Common myeloid progenitor, CD34-positive (primary cell): ENCODE measurements at regions of chr1 and their contacts with region 1.

Region 1: GRCh38 chr1:26853156-26853555 is 9.8 kb upstream of the SFN start:
- DNase-seq: peak; percentile 67 to 82 (median 76)
- H3K4me3 ChIP-seq: no peak overlapping the region
- H3K27ac ChIP-seq: no peak overlapping the region
- H3K4me1 ChIP-seq: no peaks in the 10 kb centered on the region
- H3K27me3 ChIP-seq: no peaks in the 10 kb centered on the region

Region 2: GRCh38 chr1:26833432-26834405 is 19.4 kb before region 1 on chr1:
- CTCF ChIA-PET with region 1: interaction called, 18 read pairs
- POLR2A ChIA-PET with region 1: no interaction called
- DNase-seq: peak; percentile 96 to 99 (median 97)
- H3K4me3 ChIP-seq: peak overlapping the region in 4 of 7 experiments; percentile 21 to 53 (median 36)
- H3K27ac ChIP-seq: peak overlapping the region; percentile 70 to 85
- H3K4me1 ChIP-seq: peaks cover 13 to 48% (median 33%) of the 10 kb centered on the region in 4 experiments
- H3K27me3 ChIP-seq: no peaks in the 10 kb centered on the region

Region 3: GRCh38 chr1:26864610-26865527 is 11.7 kb after region 1 on chr1:
- CTCF ChIA-PET with region 1: interaction called, 30 read pairs
- POLR2A ChIA-PET with region 1: interaction called, 3 read pairs
- DNase-seq: peak; percentile 94 to 96 (median 95)
- H3K4me3 ChIP-seq: peak overlapping the region; percentile 69 to 97 (median 86)
- H3K27ac ChIP-seq: peak overlapping the region in 1 of 2 experiments; percentile 78
- H3K4me1 ChIP-seq: peaks cover 0 to 20% (median 14%) of the 10 kb centered on the region in 4 experiments
- H3K27me3 ChIP-seq: no peaks in the 10 kb centered on the region

Region 4: GRCh38 chr1:26874896-26875295 is 21.7 kb after region 1 on chr1:
- CTCF ChIA-PET with region 1: interaction called, 56 read pairs
- POLR2A ChIA-PET with region 1: no interaction called
- DNase-seq: no peak
- H3K4me3 ChIP-seq: no peak overlapping the region
- H3K27ac ChIP-seq: no peak overlapping the region
- H3K4me1 ChIP-seq: no peaks in the 10 kb centered on the region
- H3K27me3 ChIP-seq: no peaks in the 10 kb centered on the region

Region 5: DNA sequence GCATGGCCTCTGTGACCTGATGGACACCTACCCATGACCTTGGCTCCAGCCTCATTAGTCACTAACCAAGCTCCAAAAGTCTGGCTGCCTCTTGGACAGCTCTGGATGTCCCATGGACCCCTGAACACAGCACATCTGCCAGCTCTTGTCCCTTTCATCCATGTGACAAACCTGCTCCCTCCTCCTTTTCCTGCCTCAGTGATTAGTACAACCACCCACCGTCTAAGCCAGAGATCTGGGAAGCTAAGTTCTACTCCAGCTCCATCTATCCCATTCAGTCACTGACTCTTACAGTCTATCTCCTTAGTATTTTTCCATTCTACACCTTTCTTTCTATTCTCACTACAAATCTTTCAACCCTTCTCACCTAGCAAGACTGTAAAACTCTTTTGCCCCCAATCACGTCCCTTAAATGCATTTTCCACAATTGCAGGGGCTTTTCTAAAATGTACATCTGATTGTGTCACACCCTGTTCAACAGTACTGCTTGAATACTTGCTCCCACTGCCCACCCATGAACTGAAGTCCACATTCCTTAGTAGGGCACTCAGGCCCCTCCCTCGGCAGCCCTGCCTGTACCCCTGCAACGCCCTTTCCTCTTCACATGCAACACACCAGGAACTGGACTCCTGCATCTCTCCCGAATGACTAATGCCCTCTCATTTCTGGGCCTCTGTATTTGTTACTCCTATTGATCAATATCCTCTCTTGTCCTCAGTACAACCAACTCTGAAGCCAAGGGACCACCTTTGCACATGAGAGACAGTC is 29.7 kb after region 1 on chr1:
- CTCF ChIA-PET with region 1: interaction called, 56 read pairs
- POLR2A ChIA-PET with region 1: no interaction called
- DNase-seq: no peak
- H3K4me3 ChIP-seq: no peak overlapping the region
- H3K27ac ChIP-seq: no peak overlapping the region
- H3K4me1 ChIP-seq: no peaks in the 10 kb centered on the region
- H3K27me3 ChIP-seq: no peaks in the 10 kb centered on the region

Region 6: DNA sequence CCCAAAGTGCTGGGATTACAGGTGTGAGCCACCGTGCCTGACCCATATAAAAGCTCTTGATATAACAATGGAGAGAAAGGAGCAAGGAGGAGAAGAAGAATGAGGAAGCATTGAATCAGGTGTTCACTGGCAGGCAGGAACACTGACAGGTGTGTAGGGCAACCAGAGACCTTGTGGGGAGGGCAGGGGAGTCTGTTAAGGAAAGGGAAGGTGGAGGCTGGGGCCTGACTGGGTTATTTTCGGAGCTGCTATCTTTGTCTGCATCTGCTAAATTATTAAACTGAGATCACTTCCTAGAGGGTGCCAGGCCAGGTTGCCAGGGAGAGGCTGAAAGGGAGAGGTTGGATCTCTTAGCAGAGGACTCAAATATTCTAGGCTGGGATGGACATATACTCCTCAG is 133.5 kb after region 1 on chr1:
- CTCF ChIA-PET with region 1: no interaction called
- POLR2A ChIA-PET with region 1: no interaction called
- DNase-seq: peak in 2 of 3 donors; percentile 46 to 59
- H3K4me3 ChIP-seq: no peak overlapping the region
- H3K27ac ChIP-seq: no peak overlapping the region
- H3K4me1 ChIP-seq: peaks cover 2 to 19% (median 13%) of the 10 kb centered on the region in 4 experiments
- H3K27me3 ChIP-seq: peaks cover 0 to 14% (median 4%) of the 10 kb centered on the region in 5 experiments